H1 (cell line): ENCODE measurements at regions of chr17 and their contacts with region 1.

Region 1: GRCh38 chr17:46044286-46044928 is 45.4 kb downstream of the STH start:
- DNase-seq: peak in 1 of 2 experiments; percentile 38
- H3K4me3 ChIP-seq: no peak overlapping the region
- H3K27ac ChIP-seq: no peak overlapping the region
- H3K4me1 ChIP-seq: no peaks in the 10 kb centered on the region
- H3K27me3 ChIP-seq: no peaks in the 10 kb centered on the region
- CTCF ChIP-seq: peak; percentile 27 to 96 (median 89)
- EP300 ChIP-seq: no peak
- POLR2A ChIP-seq: no peak
- RAD21 ChIP-seq: peak; percentile 58 to 70

Region 2: GRCh38 chr17:46061435-46061834 is 17.0 kb after region 1 on chr17:
- CTCF ChIA-PET with region 1: interaction called, 56 read pairs
- POLR2A ChIA-PET with region 1: interaction called, 6 read pairs
- DNase-seq: no peak
- H3K4me3 ChIP-seq: no peak overlapping the region
- H3K27ac ChIP-seq: no peak overlapping the region
- H3K4me1 ChIP-seq: peaks cover 0 to 6% (median 3%) of the 10 kb centered on the region in 4 experiments; a peak in 4 of 7 replicates
- H3K27me3 ChIP-seq: no peaks in the 10 kb centered on the region
- CTCF ChIP-seq: no peak; a peak in 1 of 4 replicates
- EP300 ChIP-seq: no peak
- POLR2A ChIP-seq: no peak
- RAD21 ChIP-seq: 0 out of 4 replicates have a peak, but pooled peaks of 1 of the 2 experiments have one; percentile 7

Region 3: DNA sequence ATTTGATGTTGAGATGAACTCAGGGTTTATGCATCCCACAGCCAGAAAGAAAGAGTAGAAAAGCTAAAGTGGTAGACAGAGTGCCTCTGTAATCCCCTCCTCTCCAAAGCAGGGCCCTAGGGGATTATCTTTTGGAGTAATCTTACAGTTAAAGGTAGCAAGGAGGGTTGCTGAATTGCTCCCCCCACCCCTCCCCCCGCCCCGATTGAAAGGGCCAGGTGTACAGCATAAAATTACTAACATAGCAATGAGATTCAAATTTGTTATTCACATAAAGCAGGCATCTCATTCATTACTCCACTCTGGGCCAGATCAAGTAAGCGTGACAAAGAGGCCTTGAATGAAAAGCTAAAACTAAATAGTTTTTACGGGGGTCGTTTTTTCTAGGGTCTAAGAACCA is 27.4 kb after region 1 on chr17:
- CTCF ChIA-PET with region 1: interaction called, 10 read pairs
- POLR2A ChIA-PET with region 1: no interaction called
- DNase-seq: no peak
- H3K4me3 ChIP-seq: no peak overlapping the region
- H3K27ac ChIP-seq: no peak overlapping the region
- H3K4me1 ChIP-seq: peaks cover 0 to 9% (median 1%) of the 10 kb centered on the region in 4 experiments; a peak in 1 of 7 replicates
- H3K27me3 ChIP-seq: no peaks in the 10 kb centered on the region
- CTCF ChIP-seq: no peak
- EP300 ChIP-seq: no peak
- POLR2A ChIP-seq: no peak
- RAD21 ChIP-seq: no peak

Region 4: DNA sequence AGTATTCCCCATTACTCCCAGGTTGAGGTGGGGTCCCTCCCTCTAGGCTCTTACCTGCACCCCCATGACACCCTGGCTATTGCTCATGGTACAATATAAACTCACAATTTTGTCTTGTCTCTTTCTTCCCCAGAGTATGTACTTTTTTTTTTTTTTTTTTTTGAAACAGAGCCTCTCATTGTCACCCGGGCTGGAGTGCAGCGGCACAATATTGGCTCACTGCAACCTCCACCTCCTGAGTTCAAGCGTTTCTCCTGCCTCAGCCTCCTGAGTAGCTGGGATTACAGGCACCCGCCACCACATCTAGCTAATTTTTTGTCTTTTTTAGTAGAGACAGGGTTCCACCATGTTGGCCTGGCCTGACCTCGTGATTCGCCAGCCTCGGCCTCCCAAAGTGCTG is 140.3 kb after region 1 on chr17:
- CTCF ChIA-PET with region 1: interaction called, 10 read pairs
- POLR2A ChIA-PET with region 1: no interaction called
- DNase-seq: no peak
- H3K4me3 ChIP-seq: no peak overlapping the region
- H3K27ac ChIP-seq: no peak overlapping the region
- H3K4me1 ChIP-seq: peaks cover 12 to 41% (median 28%) of the 10 kb centered on the region in 4 experiments
- H3K27me3 ChIP-seq: no peaks in the 10 kb centered on the region
- CTCF ChIP-seq: no peak
- EP300 ChIP-seq: no peak
- POLR2A ChIP-seq: no peak; a peak in 1 of 3 replicates
- RAD21 ChIP-seq: no peak

Region 5: DNA sequence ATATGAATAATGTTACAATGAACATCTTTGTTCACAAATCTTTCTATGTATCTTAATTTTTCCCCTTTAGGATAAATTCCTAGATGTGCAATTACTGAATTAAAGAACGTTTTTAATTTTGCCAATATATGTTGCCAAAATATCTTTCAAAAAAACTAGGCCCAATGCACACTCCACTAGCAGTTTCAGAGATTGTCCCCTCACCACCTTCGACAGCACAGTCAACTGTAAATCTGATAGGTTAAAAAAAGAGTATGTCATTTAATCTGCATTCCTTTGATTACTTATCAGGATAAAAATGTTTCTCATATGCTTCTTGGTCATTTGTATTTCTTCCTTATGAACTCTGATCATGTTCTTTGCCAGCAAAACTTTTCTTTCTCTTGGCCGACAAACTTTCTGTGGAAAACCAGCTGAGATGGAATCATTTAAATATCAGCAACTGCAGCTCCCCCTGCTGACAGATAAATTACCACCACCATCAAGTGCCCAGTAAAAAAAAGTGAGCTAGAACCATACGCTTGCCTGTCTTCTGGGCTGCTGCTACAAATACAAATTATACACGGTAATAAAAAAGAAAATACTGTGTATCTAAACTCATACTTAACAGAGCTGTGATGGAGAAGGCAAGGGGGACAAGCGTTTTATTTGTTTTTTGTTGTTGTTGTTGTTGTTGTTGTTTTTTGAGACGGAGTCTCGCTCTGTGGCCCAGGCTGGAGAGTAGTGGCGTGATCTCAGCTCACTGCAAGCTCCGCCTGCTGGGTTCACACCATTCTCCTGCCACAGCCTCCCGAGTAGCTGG is 168.4 kb after region 1 on chr17:
- CTCF ChIA-PET with region 1: interaction called, 13 read pairs
- POLR2A ChIA-PET with region 1: no interaction called
- DNase-seq: no peak
- H3K4me3 ChIP-seq: no peak overlapping the region
- H3K27ac ChIP-seq: no peak overlapping the region
- H3K4me1 ChIP-seq: no peaks in the 10 kb centered on the region
- H3K27me3 ChIP-seq: no peaks in the 10 kb centered on the region
- CTCF ChIP-seq: peak in 2 of 3 experiments; percentile 88 to 89; a peak in 3 of 4 replicates
- EP300 ChIP-seq: no peak
- POLR2A ChIP-seq: no peak
- RAD21 ChIP-seq: peak; percentile 75 to 79